CD8-positive, alpha-beta T cell (primary cell): ENCODE measurements at regions of chr10 and their contacts with region 1.

Region 1: DNA sequence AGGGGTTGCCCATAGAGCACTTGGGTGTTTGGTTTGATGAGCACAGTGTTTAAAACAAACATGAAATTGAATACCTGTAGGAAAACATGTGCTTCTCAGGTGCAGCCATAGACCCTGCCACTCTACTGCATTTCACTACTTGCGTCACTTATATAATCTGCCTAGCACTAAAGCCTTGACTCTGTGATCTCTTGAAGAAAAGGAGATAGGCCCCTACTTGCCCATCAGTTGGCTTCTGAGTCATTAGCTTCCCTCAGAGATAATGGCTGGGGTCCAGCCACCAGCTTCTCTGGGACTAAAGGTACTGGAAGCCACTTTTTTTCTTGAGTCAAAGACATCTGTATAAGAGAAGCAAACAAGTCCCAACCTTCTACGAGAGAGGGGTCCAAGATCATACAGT is 45.9 kb upstream of the BTRC start:
- DNase-seq: no peak
- ATAC-seq: no peak
- H3K4me3 ChIP-seq: no peak overlapping the region
- H3K4me3 Mint-ChIP-seq: no peak overlapping the region
- H3K27ac ChIP-seq: no peak overlapping the region
- H3K27ac Mint-ChIP-seq: no peak overlapping the region
- H3K4me1 ChIP-seq: peaks cover 9% of the 10 kb centered on the region
- H3K4me1 Mint-ChIP-seq: peaks cover 8% of the 10 kb centered on the region
- H3K27me3 ChIP-seq: peaks cover 0 to 9% of the 10 kb centered on the region in 2 experiments
- H3K27me3 Mint-ChIP-seq: peaks cover 65% of the 10 kb centered on the region
- CTCF ChIP-seq: no peak

Region 2: GRCh38 chr10:101297901-101298486 is 10.1 kb before region 1 on chr10:
- CTCF ChIA-PET with region 1: interaction called, 11 read pairs
- POLR2A ChIA-PET with region 1: no interaction called
- intact Hi-C with region 1: no loop called
- DNase-seq: peak; percentile 51 to 82 (median 74)
- ATAC-seq: peak; percentile 89
- H3K4me3 ChIP-seq: no peak overlapping the region
- H3K4me3 Mint-ChIP-seq: no peak overlapping the region
- H3K27ac ChIP-seq: no peak overlapping the region
- H3K27ac Mint-ChIP-seq: no peak overlapping the region
- H3K4me1 ChIP-seq: peaks cover under 1% of the 10 kb centered on the region
- H3K4me1 Mint-ChIP-seq: peaks cover 2% of the 10 kb centered on the region
- H3K27me3 ChIP-seq: peaks cover 3 to 4% of the 10 kb centered on the region in 2 experiments
- H3K27me3 Mint-ChIP-seq: peaks cover 50% of the 10 kb centered on the region
- CTCF ChIP-seq: peak; percentile 89